Caco-2 (cell line): ENCODE measurements at regions of chr5 and their contacts with region 1.

Region 1: GRCh38 chr5:6448622-6449464 is at the start of gene UBE2QL1:
- DNase-seq: peak in 1 of 2 experiments; percentile 39
- H3K4me3 ChIP-seq: peak within 1 kb of the TSS; percentile 8
- H3K4me3 Mint-ChIP-seq: no peak within 1 kb of the TSS
- H3K27ac Mint-ChIP-seq: no peak within 1 kb of the TSS
- H3K4me1 ChIP-seq: peaks cover 4% of the 10 kb centered on the region
- H3K4me1 Mint-ChIP-seq: peaks cover 9% of the 10 kb centered on the region
- H3K27me3 ChIP-seq: 0 out of 2 replicates have a peak, but pooled peaks cover 2% of the 10 kb centered on the region
- H3K27me3 Mint-ChIP-seq: peaks cover 26% of the 10 kb centered on the region
- CTCF ChIP-seq: no peak
- total RNA-seq, gene UBE2QL1: not detected in 2 replicates

Region 2: DNA sequence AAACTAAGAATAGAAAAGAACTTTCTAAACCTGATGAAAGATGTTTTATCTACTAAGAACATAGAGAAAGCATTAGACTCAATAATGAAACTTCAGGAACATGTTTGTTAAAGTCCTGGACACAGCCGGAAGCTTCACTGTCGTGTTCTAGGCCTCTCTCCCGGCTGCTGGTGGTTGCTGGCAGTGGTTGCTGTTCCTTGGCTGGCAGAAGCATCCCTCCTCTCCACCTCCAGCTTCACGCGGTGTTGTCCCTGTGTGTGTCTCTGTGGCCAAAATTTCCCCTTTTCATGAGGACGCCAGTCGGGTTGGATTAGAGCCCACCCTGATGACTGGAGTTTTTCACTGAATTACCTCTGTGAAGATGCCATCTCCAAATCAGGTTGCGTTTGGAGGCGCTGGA is 64.0 kb before region 1 on chr5:
- CTCF ChIA-PET with region 1: no interaction called
- POLR2A ChIA-PET with region 1: no interaction called
- intact Hi-C with region 1: loop called (anchors 1 kb)
- DNase-seq: no peak
- H3K4me3 ChIP-seq: no peak overlapping the region
- H3K4me3 Mint-ChIP-seq: no peak overlapping the region
- H3K27ac Mint-ChIP-seq: no peak overlapping the region
- H3K4me1 ChIP-seq: peaks cover 18% of the 10 kb centered on the region
- H3K4me1 Mint-ChIP-seq: no peaks in the 10 kb centered on the region
- H3K27me3 ChIP-seq: no peaks in the 10 kb centered on the region
- H3K27me3 Mint-ChIP-seq: peaks cover 4% of the 10 kb centered on the region
- CTCF ChIP-seq: no peak